Lower leg skin (tissue), 4 donors: ENCODE measurements at regions of chr16 and their contacts with region 1.

Region 1: GRCh38 chr16:28943281-28943680 is 7.5 kb upstream of the NFATC2IP start:
- DNase-seq: no peak
- H3K4me3 ChIP-seq: no peak overlapping the region
- CTCF ChIP-seq: no peak
- POLR2A ChIP-seq: no peak

Region 2: DNA sequence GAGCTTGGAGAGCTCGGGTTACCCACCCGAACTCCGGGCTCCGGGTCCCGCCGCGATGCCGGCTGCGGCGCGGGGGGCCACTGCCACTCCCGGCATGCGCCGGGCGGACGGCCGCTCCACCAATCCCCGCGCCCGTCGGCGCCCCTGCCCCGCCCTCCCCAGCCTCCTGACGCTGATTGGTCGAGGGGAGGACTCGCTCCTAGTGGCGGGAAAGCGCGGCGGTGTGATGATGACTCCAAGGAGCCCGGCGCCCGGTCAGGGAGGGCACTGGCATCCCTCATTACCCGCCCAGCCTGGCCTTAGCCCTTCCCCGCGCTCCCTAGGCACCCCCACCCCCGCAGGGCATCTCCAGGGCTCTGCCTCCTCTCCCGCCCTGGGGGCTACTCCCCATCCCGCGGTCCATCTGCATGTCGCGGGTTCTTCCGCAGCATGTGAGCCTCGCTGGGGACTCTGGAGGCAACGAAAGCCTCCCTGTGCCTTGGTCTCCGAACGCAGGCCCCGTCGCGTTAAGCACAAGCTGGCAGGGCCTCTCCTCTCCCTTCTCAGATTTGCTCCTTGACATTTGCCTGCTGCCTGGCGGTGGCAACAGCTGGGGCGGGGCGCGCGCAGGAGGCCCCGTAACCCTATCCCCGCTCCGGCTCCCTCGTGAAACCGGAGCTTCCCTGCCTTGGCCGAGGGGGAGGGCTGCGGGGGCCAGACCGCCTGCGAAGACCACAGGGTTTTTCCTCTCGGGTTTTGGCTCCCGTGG is 63.3 kb before region 1 on chr16:
- intact Hi-C with region 1: loop called (anchors 5 kb)
- DNase-seq: peak; percentile 81 to 97
- H3K4me3 ChIP-seq: peak overlapping the region; percentile 38
- CTCF ChIP-seq: no peak
- POLR2A ChIP-seq: no peak

Region 3: DNA sequence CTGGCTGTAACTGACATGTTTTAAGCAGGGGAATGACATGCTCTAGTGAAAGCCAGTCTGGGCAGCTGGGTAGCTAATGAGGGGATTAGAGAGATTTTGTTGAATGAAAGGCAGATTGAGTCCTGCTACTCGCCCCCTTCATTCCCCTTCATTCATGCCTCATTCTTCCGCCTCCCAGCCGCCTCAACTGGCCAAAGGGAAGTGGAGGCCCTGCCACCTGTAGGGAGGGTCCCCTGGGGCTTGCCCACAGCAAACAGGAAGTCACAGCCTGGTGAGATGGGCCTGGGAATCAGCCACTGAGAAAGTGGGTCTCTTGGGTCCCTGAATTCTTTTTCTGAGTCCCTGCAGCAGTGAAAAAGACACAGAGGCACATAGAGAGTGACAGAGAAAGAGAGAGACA is 12.6 kb before region 1 on chr16:
- intact Hi-C with region 1: loop called (anchors 2 kb)
- DNase-seq: no peak
- H3K4me3 ChIP-seq: no peak overlapping the region
- CTCF ChIP-seq: no peak
- POLR2A ChIP-seq: no peak

Region 4: DNA sequence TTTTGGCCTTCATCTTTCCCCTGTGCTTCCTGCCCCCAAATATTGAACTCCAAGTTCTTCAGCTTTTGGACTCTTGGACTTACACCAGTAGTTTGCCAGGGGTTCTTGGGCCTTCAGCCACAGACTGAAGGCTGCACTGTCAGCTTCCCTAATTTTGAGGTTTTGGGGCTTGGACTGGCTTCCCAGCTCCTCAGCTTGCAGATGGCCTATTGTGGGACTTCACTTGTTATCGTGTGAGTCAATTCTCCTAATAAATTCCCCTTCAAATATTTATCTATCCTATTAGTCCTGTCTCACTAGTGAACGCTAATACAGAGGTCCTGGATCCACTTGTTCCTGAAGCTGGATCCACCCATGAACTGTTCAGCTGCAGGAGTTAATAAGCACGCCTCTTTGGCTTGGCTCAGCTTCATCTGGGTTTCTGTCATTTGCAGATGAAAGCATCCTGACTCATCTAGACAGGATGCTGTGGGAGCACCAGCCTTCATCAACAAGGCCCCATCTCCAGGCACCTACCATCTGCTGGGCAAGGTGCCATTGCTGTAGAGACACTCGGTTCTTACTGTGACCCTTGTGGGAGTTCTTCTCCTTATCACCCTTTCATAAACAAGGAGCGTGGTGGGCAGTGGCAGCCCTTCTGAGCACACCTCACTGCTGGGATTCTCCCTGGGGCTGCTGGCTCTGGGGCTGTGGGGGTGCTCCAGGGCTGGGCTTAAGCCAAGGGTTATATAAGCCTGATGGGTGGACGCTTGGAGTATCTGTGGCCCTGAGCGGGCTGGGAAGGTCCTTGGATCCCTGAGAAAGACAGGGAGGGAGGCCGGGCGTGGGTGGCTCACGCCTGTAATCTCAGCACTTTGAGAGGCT is 64.7 kb after region 1 on chr16:
- intact Hi-C with region 1: no loop called
- DNase-seq: no peak
- H3K4me3 ChIP-seq: no peak overlapping the region
- CTCF ChIP-seq: no peak
- POLR2A ChIP-seq: no peak

Region 5: GRCh38 chr16:30797670-30798309 is 1854.5 kb after region 1 on chr16:
- intact Hi-C with region 1: no loop called
- DNase-seq: no peak
- H3K4me3 ChIP-seq: no peak overlapping the region
- CTCF ChIP-seq: no peak
- POLR2A ChIP-seq: no peak